ENCODE measurements at regions of chr9 and their contacts with region 1.

Region 1: DNA sequence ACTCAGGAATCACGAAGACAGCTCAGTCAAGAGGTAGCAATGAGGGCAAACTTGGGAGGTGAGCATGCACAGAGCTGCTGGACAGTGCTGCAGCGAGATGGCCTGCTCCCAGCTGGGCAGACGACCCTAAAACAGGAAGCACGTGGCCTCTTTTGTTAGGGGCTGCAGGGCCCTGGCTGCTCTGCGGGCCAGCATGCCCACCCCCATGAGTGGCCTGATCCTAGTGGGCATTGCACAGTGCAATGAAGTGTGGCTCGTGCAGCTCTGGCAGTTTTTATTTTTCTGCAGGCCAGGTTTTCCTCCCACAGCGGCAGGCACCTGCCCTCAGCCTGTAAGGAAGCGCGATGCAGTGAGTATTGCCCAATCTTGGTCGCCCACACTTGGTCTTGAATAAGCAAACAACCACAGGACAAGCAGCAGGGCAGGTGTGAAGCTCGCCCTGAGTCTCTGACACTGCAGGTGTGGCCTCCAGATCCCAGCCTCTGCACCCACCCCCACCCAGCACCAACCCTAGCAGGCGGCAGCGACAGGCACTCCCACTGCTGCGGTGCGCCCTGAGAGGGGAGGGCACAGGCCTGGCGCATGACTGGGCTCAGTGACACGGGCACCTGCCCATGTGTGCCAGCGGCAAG is 60.8 kb downstream of the SEMA4D start:
- DNase-seq: no peak
- H3K4me3 ChIP-seq: no peak overlapping the region
- H3K27ac ChIP-seq: no peak overlapping the region
- H3K4me1 ChIP-seq: peaks cover 12% of the 10 kb centered on the region
- H3K27me3 ChIP-seq: no peaks in the 10 kb centered on the region
- CTCF ChIP-seq: no peak

Region 2: GRCh38 chr9:89169310-89169709 is 267.8 kb before region 1 on chr9:
- CTCF ChIA-PET with region 1: no interaction called
- POLR2A ChIA-PET with region 1: no interaction called
- intact Hi-C with region 1: no loop called
- DNase-seq: peak in 1 of 2 experiments; percentile 41
- H3K4me3 ChIP-seq: no peak overlapping the region
- H3K27ac ChIP-seq: no peak overlapping the region
- H3K4me1 ChIP-seq: peaks cover 3% of the 10 kb centered on the region; the same call in 1 of the 2 replicates
- H3K27me3 ChIP-seq: no peaks in the 10 kb centered on the region
- CTCF ChIP-seq: no peak

Region 3: DNA sequence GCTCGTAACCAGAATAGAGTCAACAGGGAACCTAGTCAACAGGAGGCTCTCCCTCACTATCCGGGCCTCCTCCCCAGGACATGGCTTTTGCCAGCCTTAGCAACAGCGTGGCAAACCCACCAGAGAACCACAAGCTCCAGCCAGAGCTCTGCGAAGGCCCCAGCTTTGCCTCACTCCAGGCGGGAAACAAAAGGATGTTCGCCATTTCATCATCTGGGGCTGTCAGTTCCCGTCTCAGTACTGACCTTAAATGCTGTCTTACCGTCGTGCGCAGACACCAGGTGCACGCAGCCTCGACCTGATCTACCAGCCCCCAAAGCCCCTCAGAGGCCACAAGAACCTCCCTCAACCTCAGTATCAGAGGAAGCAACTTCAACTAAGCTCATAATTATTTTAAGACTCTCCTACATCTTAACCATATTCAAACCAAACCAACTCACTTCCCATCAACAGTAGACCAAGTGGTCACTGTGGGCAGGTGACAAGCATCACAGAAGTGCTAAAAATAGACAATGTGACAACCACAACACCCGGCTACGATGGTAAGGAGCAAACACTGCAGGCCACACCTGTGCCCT is 10.6 kb before region 1 on chr9:
- CTCF ChIA-PET with region 1: no interaction called
- POLR2A ChIA-PET with region 1: interaction called, 12 read pairs
- intact Hi-C with region 1: no loop called
- DNase-seq: no peak
- H3K4me3 ChIP-seq: no peak overlapping the region
- H3K27ac ChIP-seq: no peak overlapping the region
- H3K4me1 ChIP-seq: peaks cover 8% of the 10 kb centered on the region
- H3K27me3 ChIP-seq: no peaks in the 10 kb centered on the region
- CTCF ChIP-seq: no peak

Region 4: GRCh38 chr9:89497978-89498851 is 61.1 kb after region 1 on chr9 and contains the start of gene SEMA4D:
- CTCF ChIA-PET with region 1: no interaction called
- POLR2A ChIA-PET with region 1: no interaction called
- intact Hi-C with region 1: loop called (anchors 5 kb)
- DNase-seq: peak in 1 of 2 experiments; percentile 71
- H3K4me3 ChIP-seq: peak within 1 kb of the TSS; percentile 83
- H3K27ac ChIP-seq: no peak within 1 kb of the TSS
- H3K4me1 ChIP-seq: peaks cover 11% of the 10 kb centered on the region; the same call in 1 of the 2 replicates
- H3K27me3 ChIP-seq: no peaks in the 10 kb centered on the region
- CTCF ChIP-seq: no peak
- total RNA-seq, gene SEMA4D: 48.4 and 58.3 TPM in 2 replicates

Region 5: DNA sequence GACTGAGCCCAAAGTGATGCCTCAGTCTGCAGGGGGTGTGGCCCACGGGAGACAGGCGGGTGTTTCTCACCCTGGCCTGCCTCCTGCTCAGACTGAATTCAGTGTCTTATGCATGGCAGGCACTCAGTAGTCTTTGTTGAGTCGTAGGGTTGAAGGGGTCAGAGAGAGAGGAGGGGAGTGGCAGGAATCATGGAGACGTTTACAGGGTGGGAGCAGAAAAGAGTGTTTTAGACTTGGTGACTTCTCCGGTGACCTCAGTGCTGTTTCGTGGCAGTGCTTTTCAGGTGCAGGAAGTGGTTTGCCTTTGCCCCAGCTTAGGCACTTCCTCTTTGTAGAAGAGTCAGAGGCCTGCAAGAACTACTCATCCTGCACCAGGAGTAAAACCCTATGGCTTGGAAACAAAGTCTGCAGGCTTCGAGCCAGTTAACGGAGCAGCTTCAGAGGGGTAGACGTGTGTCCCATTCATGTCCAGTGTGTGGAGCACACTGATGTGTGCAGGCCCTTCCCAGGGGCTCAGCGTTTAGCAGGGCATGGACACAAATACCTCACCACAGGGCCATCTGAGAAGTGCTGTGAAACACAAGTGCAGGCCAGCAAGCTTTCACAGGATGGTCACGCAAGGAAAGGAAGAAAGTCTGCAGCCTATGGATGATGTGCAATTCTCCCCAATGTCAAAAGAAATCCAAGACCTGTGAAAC is 85.3 kb after region 1 on chr9:
- CTCF ChIA-PET with region 1: interaction called, 3 read pairs
- POLR2A ChIA-PET with region 1: no interaction called
- intact Hi-C with region 1: loop called (anchors 10 kb)
- DNase-seq: no peak
- H3K4me3 ChIP-seq: no peak overlapping the region
- H3K27ac ChIP-seq: no peak overlapping the region
- H3K4me1 ChIP-seq: peaks cover 52% of the 10 kb centered on the region
- H3K27me3 ChIP-seq: no peaks in the 10 kb centered on the region
- CTCF ChIP-seq: no peak

Measured in PC-9 (cell line).